ENCODE measurements at regions of chr17 and their contacts with region 1.

Region 1: GRCh38 chr17:75109407-75110233 is at the start of gene ARMC7:
- DNase-seq: peak; percentile 96 to 98 (median 96)
- ATAC-seq: peak; percentile 86
- H3K4me3 ChIP-seq: peak within 1 kb of the TSS; percentile 48
- H3K4me1 ChIP-seq: peaks cover 15% of the 10 kb centered on the region
- CTCF ChIP-seq: no peak
- total RNA-seq, gene ARMC7: 16.7 to 24.3 (median 18.3) TPM

Region 2: DNA sequence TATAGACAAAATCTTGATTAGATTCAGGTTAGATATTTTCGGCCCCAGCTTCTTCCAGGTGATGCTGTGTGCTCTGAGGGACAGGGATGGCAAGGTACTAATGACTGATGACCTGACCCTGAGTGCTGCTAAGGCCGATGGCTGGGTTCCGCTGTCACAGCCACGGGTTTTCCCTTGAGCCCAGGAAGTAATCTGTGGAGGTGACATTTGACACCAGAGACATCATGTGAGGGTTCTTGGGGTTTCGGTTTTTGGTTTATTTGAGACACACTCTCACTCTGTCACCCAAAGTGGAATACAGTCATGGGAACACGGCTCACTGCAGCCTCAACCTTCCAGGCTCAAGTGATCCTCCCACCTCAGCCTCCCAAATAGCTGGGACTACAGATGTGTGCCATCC is 164.1 kb before region 1 on chr17:
- intact Hi-C with region 1: no loop called
- DNase-seq: no peak
- ATAC-seq: no peak
- H3K4me3 ChIP-seq: no peak overlapping the region
- H3K4me1 ChIP-seq: no peaks in the 10 kb centered on the region
- CTCF ChIP-seq: no peak

Region 3: DNA sequence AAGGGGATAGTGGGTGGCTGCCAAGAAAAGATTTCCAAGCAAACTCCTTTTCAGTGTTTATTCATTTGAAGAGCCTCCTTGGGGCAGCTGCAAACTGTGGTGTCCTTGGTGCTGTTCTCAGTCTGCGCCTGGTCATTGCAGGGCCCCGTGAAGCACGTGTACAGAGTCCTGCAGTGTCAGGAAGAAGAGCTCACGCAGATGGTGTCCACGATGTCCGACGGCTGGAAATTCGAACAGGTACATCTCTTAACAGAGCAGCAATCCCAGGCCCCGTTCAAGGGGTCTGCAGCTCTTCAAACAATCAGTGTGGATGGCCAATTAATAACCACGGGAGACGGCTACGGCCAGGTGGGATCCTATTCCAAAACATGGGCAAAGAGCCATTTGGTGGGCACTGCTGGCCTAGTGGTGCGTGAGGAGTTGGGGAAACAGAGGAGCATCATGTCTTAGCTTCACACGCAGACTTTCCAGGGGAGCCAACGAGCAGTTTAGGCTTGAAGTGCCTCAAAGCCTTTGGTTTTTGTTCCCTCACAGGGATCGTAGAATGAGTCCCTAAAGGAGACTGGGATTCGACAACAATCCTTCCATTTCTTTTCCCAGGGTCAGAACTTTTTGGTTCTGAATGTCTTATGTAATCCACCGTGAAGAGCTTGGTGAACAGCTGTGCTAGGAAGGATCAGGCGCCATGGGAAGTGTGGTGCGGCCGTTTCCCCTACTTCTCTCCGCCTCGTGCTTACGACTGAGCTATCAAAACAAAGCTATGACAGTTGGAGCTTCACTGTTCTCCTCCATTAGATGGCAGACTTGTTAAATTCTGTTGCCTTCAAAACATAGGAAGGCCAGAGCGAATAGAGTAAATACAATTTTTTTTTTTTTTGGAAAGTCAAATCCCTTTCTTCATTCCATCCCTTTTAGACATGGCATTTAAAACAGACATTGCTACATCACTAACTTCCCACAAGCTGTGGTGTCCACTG is 50.0 kb before region 1 on chr17:
- intact Hi-C with region 1: no loop called
- DNase-seq: no peak
- ATAC-seq: peak; percentile 78
- H3K4me3 ChIP-seq: no peak overlapping the region
- H3K4me1 ChIP-seq: no peaks in the 10 kb centered on the region
- CTCF ChIP-seq: no peak

Region 4: GRCh38 chr17:75173526-75173925 is 63.9 kb after region 1 on chr17:
- intact Hi-C with region 1: loop called in 1 of 2 experiments (anchors 10 kb)
- DNase-seq: no peak
- ATAC-seq: no peak
- H3K4me3 ChIP-seq: no peak overlapping the region
- H3K4me1 ChIP-seq: no peaks in the 10 kb centered on the region
- CTCF ChIP-seq: no peak

Region 5: DNA sequence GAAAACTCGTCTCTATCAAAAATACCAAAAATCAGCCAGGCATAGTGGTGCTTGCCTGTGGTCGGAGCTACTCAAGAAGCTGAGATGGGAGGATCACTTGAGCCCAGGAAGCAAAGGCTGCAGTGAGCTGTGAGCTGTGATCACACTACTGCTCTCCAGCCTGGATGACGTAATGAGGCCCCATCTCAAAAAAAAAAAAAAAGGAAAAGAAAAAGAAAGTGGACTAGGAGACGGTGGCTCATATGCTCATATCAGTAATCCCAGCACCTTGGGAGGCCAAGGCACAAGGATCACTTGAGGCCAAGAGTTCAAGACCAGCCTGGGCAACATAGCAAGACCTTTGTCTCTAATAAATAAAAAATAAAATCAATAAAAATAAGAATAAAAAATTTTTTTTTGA is 82.0 kb after region 1 on chr17:
- intact Hi-C with region 1: loop called in 1 of 2 experiments (anchors 2 kb)
- DNase-seq: no peak
- ATAC-seq: no peak
- H3K4me3 ChIP-seq: no peak overlapping the region
- H3K4me1 ChIP-seq: no peaks in the 10 kb centered on the region
- CTCF ChIP-seq: no peak